Panc1 (cell line): ENCODE measurements at regions of chr11 and their contacts with region 1.

Region 1: DNA sequence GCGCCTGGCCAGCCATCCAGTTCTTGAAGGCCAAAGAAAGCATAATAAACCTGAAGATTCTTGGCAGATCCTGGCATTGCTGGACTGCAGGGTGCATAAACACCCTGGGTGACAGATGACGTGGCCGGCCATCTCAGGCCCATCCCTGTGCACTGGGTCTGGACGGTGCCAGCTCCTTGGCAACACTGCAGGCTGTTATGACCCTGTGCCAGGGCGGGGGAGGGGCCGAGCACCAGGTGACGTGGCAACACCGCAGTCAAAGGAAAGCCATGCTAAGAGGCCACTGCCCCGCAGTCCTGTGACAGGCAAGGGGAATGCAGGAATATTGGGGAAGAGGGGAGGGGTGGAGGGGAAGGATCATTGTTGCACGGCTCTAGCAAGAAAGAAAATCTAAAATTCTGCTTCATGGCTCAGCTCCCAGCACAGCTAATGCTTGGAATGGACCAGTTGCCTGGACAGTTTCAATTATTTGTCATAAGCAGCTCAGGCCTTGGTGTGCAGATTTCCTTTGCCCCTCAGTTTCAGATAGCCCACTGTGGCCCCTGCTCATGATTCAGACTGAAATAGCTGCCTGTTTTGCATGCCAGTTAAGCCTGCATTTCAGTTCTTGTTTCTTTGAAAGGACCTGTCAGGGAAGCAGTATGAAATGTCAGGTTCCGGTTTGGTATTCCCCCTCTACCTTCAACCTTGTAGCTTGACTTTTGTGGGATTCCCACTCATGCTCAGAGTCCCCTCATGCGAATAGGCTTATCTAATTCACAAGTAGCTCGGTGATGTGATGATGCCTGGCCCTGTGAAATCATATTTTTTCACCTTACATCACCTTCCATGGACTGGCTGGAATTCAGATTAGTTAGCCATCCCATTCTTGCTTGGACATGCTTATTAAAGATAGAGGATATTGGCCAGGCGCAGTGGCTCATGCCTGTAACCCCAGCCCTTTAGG is 29.7 kb upstream of the DDX6 start:
- DNase-seq: no peak
- ATAC-seq: peak; percentile 54
- H3K4me3 ChIP-seq: no peak overlapping the region
- H3K27ac ChIP-seq: no peak overlapping the region
- H3K4me1 ChIP-seq: no peaks in the 10 kb centered on the region
- H3K27me3 ChIP-seq: no peaks in the 10 kb centered on the region
- CTCF ChIP-seq: no peak

Region 2: DNA sequence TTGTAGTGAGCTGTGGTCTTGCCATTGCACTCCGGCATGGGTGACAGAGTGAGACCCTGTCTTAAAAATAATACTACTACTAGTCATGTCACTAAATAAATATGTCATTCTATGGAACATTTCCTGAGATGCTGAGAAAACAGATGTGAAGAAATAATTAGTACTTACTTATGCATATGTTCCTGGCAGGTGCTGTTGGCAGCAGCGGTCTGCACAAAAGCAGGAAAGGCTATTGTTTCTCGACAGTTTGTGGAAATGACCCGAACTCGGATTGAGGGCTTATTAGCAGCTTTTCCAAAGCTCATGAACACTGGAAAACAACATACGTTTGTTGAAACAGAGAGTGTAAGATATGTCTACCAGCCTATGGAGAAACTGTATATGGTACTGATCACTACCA is 239.6 kb before region 1 on chr11:
- CTCF ChIA-PET with region 1: no interaction called
- POLR2A ChIA-PET with region 1: interaction called, 12 read pairs
- in situ Hi-C with region 1: no loop called
- intact Hi-C with region 1: no loop called
- DNase-seq: no peak
- ATAC-seq: no peak
- H3K4me3 ChIP-seq: no peak overlapping the region
- H3K27ac ChIP-seq: no peak overlapping the region
- H3K4me1 ChIP-seq: no peaks in the 10 kb centered on the region
- H3K27me3 ChIP-seq: no peaks in the 10 kb centered on the region
- CTCF ChIP-seq: no peak

Region 3: DNA sequence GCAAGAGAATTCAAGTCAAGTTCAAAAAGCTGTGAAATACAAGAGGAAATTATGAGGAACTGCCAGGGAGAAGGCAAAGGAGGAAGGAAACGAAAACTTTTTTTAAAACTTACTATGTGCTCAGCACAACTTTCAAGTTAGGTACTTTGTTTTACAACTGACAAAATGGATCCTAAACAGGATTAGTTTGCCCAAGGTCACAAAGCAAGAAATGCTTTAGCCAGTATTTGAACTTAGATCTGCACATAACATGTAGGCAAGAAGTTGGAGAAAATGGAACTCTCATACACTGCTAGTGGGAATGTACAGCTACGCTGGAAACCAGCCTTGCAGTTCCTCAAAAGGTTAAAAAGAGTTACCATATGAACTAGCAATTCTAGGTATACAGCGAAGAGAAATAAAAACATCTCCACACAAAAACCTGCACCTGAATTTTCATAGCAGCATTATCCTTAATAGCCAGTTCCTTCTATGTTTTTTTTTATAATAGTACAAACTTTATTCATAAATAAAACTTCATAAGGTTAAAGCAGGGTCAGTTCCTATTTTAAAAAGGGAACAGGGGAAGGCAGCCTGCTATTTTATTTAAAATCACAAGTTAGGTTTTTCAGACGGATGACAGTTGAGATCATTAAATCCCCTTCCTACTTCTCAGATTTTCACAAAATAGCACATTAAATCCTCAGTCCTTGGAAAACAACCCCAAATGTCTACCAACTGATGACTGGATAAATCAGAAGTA is 49.0 kb before region 1 on chr11:
- CTCF ChIA-PET with region 1: no interaction called
- POLR2A ChIA-PET with region 1: no interaction called
- in situ Hi-C with region 1: no loop called
- intact Hi-C with region 1: no loop called
- DNase-seq: no peak
- ATAC-seq: no peak
- H3K4me3 ChIP-seq: no peak overlapping the region
- H3K27ac ChIP-seq: no peak overlapping the region
- H3K4me1 ChIP-seq: no peaks in the 10 kb centered on the region
- H3K27me3 ChIP-seq: no peaks in the 10 kb centered on the region
- CTCF ChIP-seq: no peak